Esophagus muscularis mucosa (tissue), 4 donors: ENCODE measurements at regions of chr2 and their contacts with region 1.

Region 1: GRCh38 chr2:23926750-23927571 is at the start of gene ATAD2B:
- DNase-seq: peak; percentile 94
- H3K4me3 ChIP-seq: peak within 1 kb of the TSS; percentile 76 to 97 (median 92)
- H3K27ac ChIP-seq: peak within 1 kb of the TSS; percentile 95 to 98 (median 98)
- H3K4me1 ChIP-seq: peaks cover 27 to 56% (median 55%) of the 10 kb centered on the region in 4 donors
- H3K27me3 ChIP-seq: no peaks in the 10 kb centered on the region
- CTCF ChIP-seq: peak in 2 of 3 experiments; percentile 86 to 89
- EP300 ChIP-seq: no peak
- POLR2A ChIP-seq: peak; percentile 18
- total RNA-seq, gene ATAD2B: 8.0 to 17.4 (median 13.5) TPM

Region 2: DNA sequence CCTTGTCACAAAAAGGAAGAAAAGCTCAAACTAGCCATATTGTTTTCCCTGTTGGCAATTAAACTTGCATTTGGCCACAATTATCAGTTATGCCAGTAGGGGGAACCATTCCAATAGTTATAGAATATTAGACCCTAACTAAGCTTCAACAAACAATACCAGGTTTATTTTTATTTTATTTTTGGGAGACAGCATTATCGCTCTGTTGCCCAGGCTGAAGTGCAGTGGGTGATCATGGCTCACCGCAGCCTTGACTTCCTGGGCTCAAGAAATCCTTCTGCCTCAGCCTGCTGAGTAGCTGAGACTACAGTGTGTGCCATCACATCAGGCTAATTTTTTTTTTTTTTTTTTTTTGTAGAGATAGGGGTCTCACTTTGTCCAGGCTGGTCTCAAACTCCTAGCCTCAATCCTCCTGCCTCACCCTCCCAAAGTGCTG is 102.2 kb before region 1 on chr2:
- intact Hi-C with region 1: loop called (anchors 10 kb)
- DNase-seq: no peak
- H3K4me3 ChIP-seq: no peak overlapping the region
- H3K27ac ChIP-seq: no peak overlapping the region
- H3K4me1 ChIP-seq: peaks cover 0 to 8% (median 3%) of the 10 kb centered on the region in 4 donors
- H3K27me3 ChIP-seq: no peaks in the 10 kb centered on the region
- CTCF ChIP-seq: peak; percentile 65 to 72 (median 68)
- EP300 ChIP-seq: no peak
- POLR2A ChIP-seq: no peak

Region 3: GRCh38 chr2:23939987-23940717 is 13.2 kb after region 1 on chr2 and contains the start of gene UBXN2A:
- intact Hi-C with region 1: loop called (anchors 2 kb)
- DNase-seq: peak; percentile 92
- H3K4me3 ChIP-seq: peak within 1 kb of the TSS; percentile 69 to 97 (median 89)
- H3K27ac ChIP-seq: peak within 1 kb of the TSS; percentile 93 to 98 (median 96)
- H3K4me1 ChIP-seq: peaks cover 23 to 45% (median 41%) of the 10 kb centered on the region in 4 donors
- H3K27me3 ChIP-seq: no peaks in the 10 kb centered on the region
- CTCF ChIP-seq: no peak
- EP300 ChIP-seq: no peak
- POLR2A ChIP-seq: peak; percentile 27
- total RNA-seq, gene UBXN2A: 17.1 to 23.4 (median 20.3) TPM

Region 4: DNA sequence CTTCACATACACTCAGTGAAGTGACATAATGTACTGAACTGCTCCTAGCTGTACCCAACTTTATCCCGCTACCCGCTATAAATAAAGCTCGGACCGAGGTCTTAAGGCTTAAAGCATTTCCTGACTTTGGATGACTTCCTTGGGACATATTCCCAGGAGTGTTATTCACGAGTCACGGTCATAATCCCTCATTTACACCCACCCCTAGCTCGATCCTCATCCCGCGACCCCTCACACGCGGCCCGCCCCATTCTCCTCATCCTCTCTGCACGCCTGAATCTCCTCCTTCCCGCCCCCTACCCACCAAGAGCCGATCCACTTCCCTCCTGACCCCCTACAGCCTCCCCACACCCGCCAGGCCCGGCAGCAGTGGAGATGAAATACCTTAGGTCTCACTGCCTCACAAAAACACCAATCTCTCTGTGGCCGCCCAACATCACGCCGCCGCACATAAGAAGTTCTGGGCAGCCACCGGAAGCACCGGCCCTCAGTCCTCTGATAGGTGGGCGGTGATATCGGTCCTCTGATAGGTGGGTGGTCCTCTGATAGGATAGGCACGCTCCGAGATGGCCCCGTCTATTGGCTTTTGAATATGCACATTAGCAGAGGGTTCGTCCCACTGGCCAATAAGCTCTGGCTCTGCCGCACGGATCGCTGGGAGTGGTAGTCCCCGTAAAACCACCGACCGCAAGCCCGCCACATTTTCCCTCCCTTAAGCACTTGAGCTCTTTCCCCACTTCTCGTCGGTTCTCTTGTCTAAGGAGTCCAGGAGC is 120.2 kb after region 1 on chr2 and contains the start of gene WDCP:
- intact Hi-C with region 1: loop called (anchors 10 kb)
- DNase-seq: peak; percentile 98
- H3K4me3 ChIP-seq: peak within 1 kb of the TSS; percentile 74 to 88 (median 82)
- H3K27ac ChIP-seq: peak within 1 kb of the TSS; percentile 76 to 85 (median 79)
- H3K4me1 ChIP-seq: peaks cover 13 to 48% (median 38%) of the 10 kb centered on the region in 4 donors
- H3K27me3 ChIP-seq: no peaks in the 10 kb centered on the region
- CTCF ChIP-seq: no peak
- EP300 ChIP-seq: no peak
- POLR2A ChIP-seq: no peak
- total RNA-seq, gene WDCP: 4.5 to 9.1 (median 6.2) TPM

Region 5: GRCh38 chr2:24075915-24076848 is 149.2 kb after region 1 on chr2 and contains the start of gene SF3B6:
- intact Hi-C with region 1: loop called (anchors 5 kb)
- DNase-seq: peak; percentile 99
- H3K4me3 ChIP-seq: peak within 1 kb of the TSS; percentile 70 to 91 (median 74)
- H3K27ac ChIP-seq: peak within 1 kb of the TSS; percentile 88 to 96 (median 92)
- H3K4me1 ChIP-seq: peaks cover 19 to 39% (median 25%) of the 10 kb centered on the region in 4 donors
- H3K27me3 ChIP-seq: no peaks in the 10 kb centered on the region
- CTCF ChIP-seq: peak in 1 of 3 experiments; percentile 12
- EP300 ChIP-seq: no peak
- POLR2A ChIP-seq: no peak
- total RNA-seq, gene SF3B6: 86.9 to 121 (median 113) TPM